Common myeloid progenitor, CD34-positive (primary cell): ENCODE measurements at regions of chr3 and their contacts with region 1.

Region 1: DNA sequence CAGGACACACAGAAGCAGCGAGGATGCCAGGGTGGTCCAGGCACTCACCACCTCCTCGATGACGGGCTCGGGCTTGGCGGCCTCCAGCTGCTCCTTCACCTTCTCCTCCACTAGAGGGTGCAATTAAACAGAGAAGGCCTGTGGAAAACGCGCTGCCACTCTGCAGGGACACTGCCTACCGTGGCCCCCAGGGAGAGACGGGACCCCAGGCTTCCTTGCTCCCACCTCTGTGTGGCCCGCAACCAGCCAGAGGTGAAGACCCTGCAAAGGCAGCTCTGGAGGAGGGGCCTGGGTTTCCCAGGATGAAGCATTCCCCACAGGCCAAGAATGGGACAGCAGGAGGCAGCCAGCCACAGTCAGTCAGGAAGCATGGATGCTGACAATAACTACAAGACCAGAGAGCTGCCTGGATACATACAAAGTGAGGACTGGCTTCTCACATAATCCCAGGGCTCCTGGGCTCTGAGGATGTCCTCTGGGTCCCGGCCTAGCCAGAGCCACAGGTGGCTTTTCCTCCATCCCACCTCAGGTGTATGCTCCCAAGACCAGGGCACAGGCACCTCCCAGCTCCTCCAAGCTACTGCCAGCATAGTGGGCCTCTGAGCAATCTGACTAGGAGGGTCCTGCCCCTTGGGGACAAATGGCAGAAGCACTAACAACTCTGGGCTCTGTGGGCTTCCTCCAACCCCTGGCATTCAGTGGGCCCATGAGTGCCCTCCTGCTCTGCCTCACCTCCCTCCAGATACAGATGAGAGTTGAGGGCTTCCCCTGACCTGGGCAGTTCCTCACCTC is 46.2 kb downstream of the PTH1R start:
- DNase-seq: peak in 2 of 3 donors; percentile 68 to 69
- H3K4me3 ChIP-seq: no peak overlapping the region
- H3K27ac ChIP-seq: peak overlapping the region in 1 of 2 experiments; percentile 27
- H3K4me1 ChIP-seq: peaks cover 10 to 45% (median 42%) of the 10 kb centered on the region in 4 experiments
- H3K27me3 ChIP-seq: no peaks in the 10 kb centered on the region

Region 2: GRCh38 chr3:46935168-46935858 is 11.6 kb after region 1 on chr3:
- CTCF ChIA-PET with region 1: interaction called, 15 read pairs
- POLR2A ChIA-PET with region 1: no interaction called
- DNase-seq: peak in 1 of 3 donors; percentile 34
- H3K4me3 ChIP-seq: no peak overlapping the region
- H3K27ac ChIP-seq: peak overlapping the region in 1 of 2 experiments; percentile 15
- H3K4me1 ChIP-seq: peaks cover 27 to 80% (median 53%) of the 10 kb centered on the region in 4 experiments
- H3K27me3 ChIP-seq: no peaks in the 10 kb centered on the region

Region 3: DNA sequence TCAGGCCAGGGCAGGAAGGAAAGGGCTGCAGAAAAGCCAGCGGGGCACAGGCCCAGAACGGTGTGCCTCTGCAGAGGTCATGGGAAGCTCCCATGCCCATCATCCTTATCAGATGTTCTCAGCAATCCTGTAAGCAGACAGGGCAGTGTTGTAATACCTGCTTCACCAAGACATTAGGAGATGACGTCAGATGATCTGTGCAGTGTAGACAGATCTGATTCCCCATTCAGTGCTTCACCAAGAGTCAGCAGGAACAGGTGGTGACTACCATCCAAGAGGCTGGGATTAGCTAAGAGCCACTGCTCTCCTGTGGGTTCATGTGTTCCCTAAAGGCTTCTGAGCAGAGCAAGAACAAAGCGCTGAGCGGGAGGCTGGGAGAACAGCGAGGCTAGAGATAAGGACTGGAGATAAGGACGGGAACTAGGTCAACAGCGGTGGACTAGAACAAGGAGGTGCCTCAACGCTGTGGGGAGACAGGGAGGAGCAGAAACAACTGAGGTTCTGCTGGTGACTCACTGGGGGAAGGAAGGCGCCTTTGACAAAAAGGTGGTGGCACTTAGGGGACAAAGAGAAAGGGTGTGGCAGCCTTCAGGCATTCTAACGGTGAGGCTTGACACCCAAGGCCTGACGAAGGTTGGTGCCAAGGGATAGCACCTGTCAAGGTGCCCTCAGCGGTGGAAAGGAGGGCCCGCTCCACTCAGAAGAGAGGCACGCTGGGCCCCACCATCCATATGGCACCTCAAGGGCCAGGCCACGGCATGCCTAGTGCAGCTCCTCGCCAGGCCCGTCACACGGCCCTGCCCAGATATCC is 24.4 kb after region 1 on chr3:
- CTCF ChIA-PET with region 1: interaction called, 14 read pairs
- POLR2A ChIA-PET with region 1: no interaction called
- DNase-seq: peak in 2 of 3 donors; percentile 63 to 72
- H3K4me3 ChIP-seq: peak overlapping the region in 2 of 7 experiments; percentile 26 to 31
- H3K27ac ChIP-seq: peak overlapping the region in 1 of 2 experiments; percentile 68
- H3K4me1 ChIP-seq: peaks cover 21 to 61% (median 55%) of the 10 kb centered on the region in 4 experiments
- H3K27me3 ChIP-seq: no peaks in the 10 kb centered on the region

Region 4: GRCh38 chr3:46960081-46960701 is 36.4 kb after region 1 on chr3:
- CTCF ChIA-PET with region 1: interaction called, 13 read pairs
- POLR2A ChIA-PET with region 1: interaction called, 4 read pairs
- DNase-seq: no peak
- H3K4me3 ChIP-seq: no peak overlapping the region
- H3K27ac ChIP-seq: peak overlapping the region in 1 of 2 experiments; percentile 0
- H3K4me1 ChIP-seq: peaks cover 17 to 61% (median 50%) of the 10 kb centered on the region in 4 experiments
- H3K27me3 ChIP-seq: no peaks in the 10 kb centered on the region

Region 5: DNA sequence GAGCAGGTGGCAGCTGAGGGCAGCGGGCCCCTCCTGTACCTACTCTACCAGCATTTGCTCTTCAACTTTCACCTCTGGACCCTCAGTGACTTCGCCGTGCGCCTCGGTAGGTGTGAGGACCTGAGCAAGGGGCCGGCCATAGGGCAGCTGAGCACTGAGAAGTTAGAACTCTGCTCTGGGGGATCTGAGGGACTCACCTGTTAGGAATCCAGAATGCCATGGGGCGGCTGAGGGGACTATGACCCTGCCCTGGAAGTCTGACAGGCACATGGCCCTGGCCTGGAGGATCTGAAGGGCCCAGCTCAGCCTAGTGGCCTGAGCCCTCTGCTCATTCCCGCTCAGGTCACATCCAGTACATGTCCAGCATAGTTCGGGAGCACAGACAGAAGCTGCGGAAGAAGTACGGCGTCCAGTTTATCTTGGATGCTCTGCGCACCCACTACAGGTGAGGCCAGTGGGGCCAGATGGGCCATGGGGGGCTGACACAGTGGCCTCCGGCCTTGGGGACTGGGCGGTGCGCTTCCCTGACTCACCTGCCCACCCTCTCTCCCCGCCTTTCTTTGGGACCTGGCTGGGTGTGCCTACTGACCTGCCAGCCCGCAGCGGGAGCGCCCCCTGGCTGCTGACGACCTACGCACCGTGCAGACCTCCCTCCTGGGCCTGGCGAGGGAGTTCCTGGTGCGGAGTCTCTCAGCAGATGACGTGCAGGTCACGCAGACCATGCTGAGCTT is 74.5 kb after region 1 on chr3:
- CTCF ChIA-PET with region 1: interaction called, 164 read pairs
- POLR2A ChIA-PET with region 1: interaction called, 6 read pairs
- DNase-seq: peak; percentile 75 to 81 (median 77)
- H3K4me3 ChIP-seq: no peak overlapping the region
- H3K27ac ChIP-seq: no peak overlapping the region
- H3K4me1 ChIP-seq: peaks cover 0 to 35% (median 19%) of the 10 kb centered on the region in 4 experiments
- H3K27me3 ChIP-seq: no peaks in the 10 kb centered on the region

Region 6: GRCh38 chr3:47243419-47244147 is 319.8 kb after region 1 on chr3:
- CTCF ChIA-PET with region 1: no interaction called
- POLR2A ChIA-PET with region 1: no interaction called
- DNase-seq: no peak
- H3K4me3 ChIP-seq: no peak overlapping the region
- H3K27ac ChIP-seq: no peak overlapping the region
- H3K4me1 ChIP-seq: peaks cover 0 to 4% (median 0%) of the 10 kb centered on the region in 4 experiments
- H3K27me3 ChIP-seq: no peaks in the 10 kb centered on the region